ENCODE measurements at regions of chr3 and their contacts with region 1.

Region 1: DNA sequence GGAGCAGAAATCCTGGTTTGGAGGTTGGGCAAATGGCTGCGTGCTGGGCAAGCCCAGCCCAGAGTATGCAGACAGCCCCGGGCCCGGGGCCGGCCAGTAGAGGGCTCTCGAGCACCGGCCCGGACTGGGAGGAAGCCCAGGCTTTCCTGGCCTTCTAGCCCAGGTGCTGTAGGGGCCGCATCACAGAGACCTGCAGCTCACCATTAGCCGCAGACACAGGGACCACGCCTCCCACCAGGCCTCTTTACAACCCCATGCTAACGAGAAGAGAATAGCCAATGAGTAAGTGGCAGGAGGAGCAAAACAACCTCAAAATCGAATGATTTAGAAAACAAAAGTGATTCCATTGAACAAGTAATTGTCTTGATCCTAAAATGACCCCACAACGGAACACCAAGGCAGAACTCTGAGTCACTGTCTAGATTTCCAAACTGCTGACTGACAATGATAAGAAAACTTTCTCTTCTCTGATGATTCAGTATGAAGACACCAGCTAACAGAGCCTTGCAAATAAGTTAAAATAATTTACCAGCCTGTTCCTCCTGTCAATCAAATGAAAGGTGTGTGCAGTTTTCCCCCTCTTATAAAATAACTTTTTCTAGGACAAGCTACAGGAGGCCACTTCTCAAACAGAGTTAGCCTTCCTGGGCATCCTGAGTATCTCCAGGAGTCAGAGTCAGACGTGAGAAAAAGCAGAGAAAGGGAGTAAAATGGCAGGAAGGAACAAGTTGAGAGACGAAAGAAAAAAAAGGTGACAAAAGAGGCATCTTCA is 102.2 kb downstream of the DGKG start:
- DNase-seq: peak; percentile 68
- ATAC-seq: peak; percentile 93 to 96

Region 2: DNA sequence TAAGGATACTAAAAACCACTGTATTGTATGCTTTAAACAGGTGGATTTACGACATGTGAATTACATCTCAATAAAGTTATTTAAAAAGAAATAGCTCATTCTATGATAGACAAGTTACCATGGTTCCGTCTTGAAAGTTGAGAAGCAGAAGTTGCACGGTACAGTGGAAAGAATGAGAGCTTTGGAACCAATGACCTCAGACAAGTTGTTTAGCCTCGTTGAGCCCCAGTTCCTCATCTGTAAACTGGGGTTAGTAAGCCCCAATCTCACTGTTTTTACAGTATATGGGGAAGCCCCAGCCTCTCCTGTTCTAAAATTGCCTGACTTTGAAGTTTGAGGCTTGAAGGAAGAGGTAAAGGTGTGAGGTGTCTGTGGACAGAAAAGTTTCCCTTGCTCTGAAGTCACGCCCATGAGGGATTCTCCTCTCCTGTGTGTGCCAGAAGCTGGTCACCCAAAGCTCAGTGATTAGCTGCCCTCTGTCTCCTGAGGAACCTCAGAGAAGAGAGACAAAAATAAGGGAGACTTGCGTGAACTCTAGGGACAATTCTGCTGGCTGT is 274.4 kb after region 1 on chr3:
- intact Hi-C with region 1: loop called in 1 of 2 experiments (anchors 10 kb)
- DNase-seq: no peak
- ATAC-seq: peak in 1 of 2 donors; percentile 38

Region 3: GRCh38 chr3:186540221-186540834 is 280.5 kb after region 1 on chr3:
- intact Hi-C with region 1: loop called (anchors 5 to 10 kb)
- DNase-seq: peak; percentile 58
- ATAC-seq: peak; percentile 73 to 86

Measured in left cardiac atrium (tissue), 4 donors.